Activated CD4-positive, alpha-beta T cell treated with anti-CD3 and anti-CD28 coated beads, Interleukin-2, amount 10 ng/mL, durations not matched to agents 24 days and 14 days (primary cell): ENCODE measurements at regions of chr5 and their contacts with region 1.

Region 1: GRCh38 chr5:35089334-35090314 is 41.9 kb upstream of the AGXT2 start:
- DNase-seq: peak; percentile 85
- H3K4me3 Mint-ChIP-seq: no peak overlapping the region
- H3K27ac Mint-ChIP-seq: no peak overlapping the region
- H3K4me1 Mint-ChIP-seq: no peaks in the 10 kb centered on the region
- H3K27me3 Mint-ChIP-seq: peaks cover 2% of the 10 kb centered on the region

Region 2: GRCh38 chr5:35182541-35183535 is 93.2 kb after region 1 on chr5:
- intact Hi-C with region 1: loop called (anchors 5 kb)
- DNase-seq: peak; percentile 63
- H3K4me3 Mint-ChIP-seq: no peak overlapping the region
- H3K27ac Mint-ChIP-seq: no peak overlapping the region
- H3K4me1 Mint-ChIP-seq: no peaks in the 10 kb centered on the region
- H3K27me3 Mint-ChIP-seq: peaks cover 7% of the 10 kb centered on the region

Region 3: DNA sequence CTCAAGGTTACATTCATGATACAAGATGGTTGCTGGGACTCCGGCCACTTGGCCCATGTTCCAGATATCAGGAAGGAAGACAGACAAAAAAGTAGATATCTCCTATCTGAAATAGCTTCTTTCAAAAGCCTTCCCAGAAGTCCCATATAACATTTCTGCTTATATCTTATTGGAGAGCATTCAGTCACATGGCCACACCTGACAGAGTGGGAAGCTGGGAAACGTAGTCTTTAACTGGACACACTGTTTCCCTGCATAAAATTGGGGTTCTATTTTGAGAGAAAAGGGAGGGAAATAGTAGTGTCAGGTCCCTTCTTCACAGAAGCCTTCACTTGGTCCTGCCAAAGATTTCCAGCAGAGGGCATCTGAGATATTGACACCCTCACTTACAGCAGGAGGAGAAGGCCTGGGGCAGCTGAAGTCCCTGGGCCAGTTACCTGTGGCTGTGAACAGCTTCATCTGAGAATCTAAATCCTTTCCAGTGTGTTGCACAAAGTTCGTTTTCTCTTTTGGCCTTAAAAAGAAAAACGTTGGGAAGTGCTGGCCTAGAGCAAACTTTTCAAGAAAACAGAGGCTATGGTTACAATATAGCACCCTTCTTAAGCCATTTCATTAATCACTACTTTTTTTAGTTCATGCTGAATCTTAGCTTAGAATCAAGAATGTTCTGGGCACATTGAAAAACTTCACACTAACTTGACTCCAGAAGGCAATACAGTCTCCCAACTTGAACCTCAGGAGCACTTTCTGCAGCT is 561.6 kb after region 1 on chr5:
- intact Hi-C with region 1: loop called (anchors 2 kb)
- DNase-seq: peak; percentile 90
- H3K4me3 Mint-ChIP-seq: no peak overlapping the region
- H3K27ac Mint-ChIP-seq: no peak overlapping the region
- H3K4me1 Mint-ChIP-seq: peaks cover 2% of the 10 kb centered on the region
- H3K27me3 Mint-ChIP-seq: no peaks in the 10 kb centered on the region